ENCODE measurements at regions of chr5 and their contacts with region 1.

Region 1: GRCh38 chr5:115169487-115170133 is at the start of gene TRIM36:
- DNase-seq: peak; percentile 83 to 87 (median 86)
- H3K4me3 ChIP-seq: peak within 1 kb of the TSS; percentile 17 to 67
- H3K4me3 Mint-ChIP-seq: peak within 1 kb of the TSS; percentile 79 to 84 (median 81)
- H3K27ac ChIP-seq: no peak within 1 kb of the TSS
- H3K27ac Mint-ChIP-seq: peak within 1 kb of the TSS in 3 of 7 donors; percentile 25 to 64 (median 41)
- H3K4me1 ChIP-seq: peaks cover 21% of the 10 kb centered on the region
- H3K4me1 Mint-ChIP-seq: peaks cover 2 to 13% (median 11%) of the 10 kb centered on the region in 4 donors
- H3K27me3 ChIP-seq: peaks cover 43% of the 10 kb centered on the region
- H3K27me3 Mint-ChIP-seq: peaks cover 38 to 48% of the 10 kb centered on the region in 2 donors
- total RNA-seq, gene TRIM36: not detected

Region 2: GRCh38 chr5:115098041-115098702 is 71.4 kb before region 1 on chr5:
- CTCF ChIA-PET with region 1: no interaction called
- POLR2A ChIA-PET with region 1: no interaction called
- intact Hi-C with region 1: no loop called
- DNase-seq: peak in 4 of 5 donors; percentile 16 to 28 (median 21)
- H3K4me3 ChIP-seq: no peak overlapping the region
- H3K4me3 Mint-ChIP-seq: no peak overlapping the region
- H3K27ac ChIP-seq: no peak overlapping the region
- H3K27ac Mint-ChIP-seq: no peak overlapping the region
- H3K4me1 ChIP-seq: no peaks in the 10 kb centered on the region
- H3K4me1 Mint-ChIP-seq: no peaks in the 10 kb centered on the region
- H3K27me3 ChIP-seq: no peaks in the 10 kb centered on the region
- H3K27me3 Mint-ChIP-seq: peaks cover 6 to 11% of the 10 kb centered on the region in 2 donors

Region 3: DNA sequence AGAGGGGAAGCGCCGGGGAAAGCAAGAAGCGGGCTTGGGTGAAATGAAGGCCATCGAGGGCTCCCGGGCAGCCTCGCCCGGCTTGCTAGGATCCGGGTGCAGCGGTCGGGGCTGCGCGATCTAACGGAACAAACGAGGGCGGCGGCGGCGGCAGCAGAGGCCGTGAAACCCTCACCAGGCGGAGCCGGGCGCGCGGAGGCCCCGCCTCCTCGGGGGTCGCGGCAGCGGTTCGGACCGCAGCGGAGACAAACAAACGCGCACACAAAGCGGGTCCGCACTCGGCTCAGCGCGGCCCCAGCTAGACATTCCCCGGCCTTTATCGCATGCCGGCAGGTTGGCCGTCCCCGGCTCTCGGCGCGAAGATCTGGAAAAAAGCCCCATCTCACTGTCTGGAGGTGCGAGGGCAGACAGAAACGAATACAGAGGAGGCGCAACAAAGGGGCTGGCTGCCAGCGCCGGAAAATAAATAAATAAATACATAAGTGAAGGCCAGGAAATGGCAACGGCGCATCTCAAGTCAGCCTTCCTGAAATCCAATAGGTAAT is 10.6 kb after region 1 on chr5:
- CTCF ChIA-PET with region 1: no interaction called
- POLR2A ChIA-PET with region 1: interaction called, 3 read pairs
- intact Hi-C with region 1: loop called (anchors 1 kb)
- DNase-seq: peak; percentile 23 to 33 (median 32)
- H3K4me3 ChIP-seq: peak overlapping the region in 1 of 2 donors; percentile 43
- H3K4me3 Mint-ChIP-seq: peak overlapping the region; percentile 79 to 90 (median 84)
- H3K27ac ChIP-seq: no peak overlapping the region
- H3K27ac Mint-ChIP-seq: peak overlapping the region in 2 of 7 donors; percentile 55 to 61
- H3K4me1 ChIP-seq: peaks cover 17% of the 10 kb centered on the region
- H3K4me1 Mint-ChIP-seq: peaks cover 3 to 16% (median 8%) of the 10 kb centered on the region in 4 donors
- H3K27me3 ChIP-seq: peaks cover 64% of the 10 kb centered on the region
- H3K27me3 Mint-ChIP-seq: peaks cover 59 to 62% of the 10 kb centered on the region in 2 donors

Region 4: GRCh38 chr5:115289104-115289503 is 119.5 kb after region 1 on chr5:
- CTCF ChIA-PET with region 1: no interaction called
- POLR2A ChIA-PET with region 1: no interaction called
- intact Hi-C with region 1: no loop called
- DNase-seq: no peak
- H3K4me3 ChIP-seq: no peak overlapping the region
- H3K4me3 Mint-ChIP-seq: no peak overlapping the region
- H3K27ac ChIP-seq: no peak overlapping the region
- H3K27ac Mint-ChIP-seq: no peak overlapping the region
- H3K4me1 ChIP-seq: no peaks in the 10 kb centered on the region
- H3K4me1 Mint-ChIP-seq: peaks cover 0 to 9% (median 6%) of the 10 kb centered on the region in 4 donors
- H3K27me3 ChIP-seq: no peaks in the 10 kb centered on the region
- H3K27me3 Mint-ChIP-seq: peaks cover 0 to 2% of the 10 kb centered on the region in 2 donors

Measured in CD4-positive, alpha-beta memory T cell (primary cell).